Posterior cingulate gyrus (tissue), 11 donors: ENCODE measurements at regions of chr6 and their contacts with region 1.

Region 1: GRCh38 chr6:79233611-79234149 is 802 bp downstream of the HMGN3 start:
- DNase-seq: peak; percentile 80 to 97 (median 86)

Region 2: DNA sequence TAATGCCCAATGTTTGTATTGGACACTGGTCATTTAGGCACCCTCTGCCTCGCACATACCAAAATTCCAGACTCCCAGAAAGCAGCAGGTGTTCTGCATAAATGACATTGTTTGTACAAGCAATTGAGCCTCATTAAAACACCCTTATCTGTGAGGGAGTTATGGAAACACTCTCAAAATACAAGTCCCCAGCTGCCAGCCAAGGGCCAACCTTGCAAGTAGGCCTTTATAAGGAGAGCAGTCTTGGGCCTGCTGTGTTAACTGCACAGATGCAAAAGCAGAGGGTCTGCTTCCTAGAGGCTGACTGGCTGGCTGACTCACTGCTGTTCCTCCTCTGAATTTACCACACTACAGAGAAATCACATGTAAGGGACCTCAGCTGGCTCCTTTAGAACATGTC is 151.2 kb after region 1 on chr6:
- intact Hi-C with region 1: no loop called
- DNase-seq: no peak

Region 3: DNA sequence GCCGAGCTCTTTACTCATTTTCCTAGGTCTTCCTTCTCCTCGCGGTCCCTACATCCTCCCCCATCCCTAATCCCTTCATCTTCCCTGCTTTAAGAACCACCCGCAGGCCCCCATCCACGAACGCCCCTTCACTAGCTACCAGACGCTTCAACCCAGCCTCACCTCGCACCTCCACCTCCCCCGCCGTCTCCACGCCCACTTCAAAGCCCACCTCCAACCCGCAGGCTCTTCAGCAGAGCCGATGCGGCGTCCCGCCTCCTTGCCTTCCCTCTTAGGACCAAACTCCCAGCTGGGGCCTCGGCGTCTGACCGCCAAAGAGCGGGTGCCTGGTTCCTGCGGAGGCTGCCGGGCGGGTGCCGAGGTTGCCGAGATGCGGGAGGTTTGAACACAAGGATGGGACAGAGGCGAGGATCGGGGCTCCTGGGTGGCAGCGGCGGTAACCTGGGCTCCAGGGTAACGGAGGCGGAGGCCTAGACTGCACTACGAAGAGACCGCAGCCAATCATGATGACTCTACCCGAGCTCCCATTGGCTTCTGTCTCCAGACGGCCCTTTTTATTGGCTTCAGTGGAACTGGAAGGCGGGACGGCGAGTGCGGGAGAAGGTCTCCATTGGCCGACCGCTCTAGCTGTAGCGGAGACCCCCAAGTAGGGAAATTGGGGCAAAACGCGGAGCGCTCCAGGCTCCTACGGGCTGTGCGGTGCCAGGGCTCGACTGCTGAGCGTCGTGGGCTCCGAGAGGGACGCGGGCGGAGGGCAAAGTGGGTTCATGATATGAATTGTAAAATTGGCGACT is 303.5 kb after region 1 on chr6 and contains the start of gene LCA5:
- intact Hi-C with region 1: loop called (anchors 1 kb)
- DNase-seq: peak; percentile 91 to 99 (median 95)